ENCODE measurements at regions of chrX and their contacts with region 1.

Region 1: DNA sequence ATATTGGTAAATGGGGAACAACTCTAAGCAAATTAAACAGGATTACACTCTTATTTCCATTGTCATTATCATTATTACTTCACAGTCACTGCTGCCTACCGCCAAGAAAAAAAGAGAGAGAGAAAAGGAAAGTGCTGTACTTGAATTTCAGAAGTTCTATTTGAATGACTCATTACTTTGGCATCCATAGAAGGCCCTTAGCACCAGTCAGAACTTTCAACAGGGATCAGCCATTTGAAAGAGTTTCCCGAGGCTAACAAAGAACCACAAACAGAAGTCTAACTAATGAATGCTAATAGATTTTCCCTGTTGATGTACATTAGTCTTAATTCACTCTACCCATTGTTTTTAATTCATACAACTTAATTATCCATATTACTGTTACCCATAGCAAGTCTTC is 116.3 kb downstream of the SHROOM4 start:
- H3K4me3 ChIP-seq: no peak overlapping the region
- H3K27ac ChIP-seq: no peak overlapping the region
- H3K4me1 ChIP-seq: no peaks in the 10 kb centered on the region
- CTCF ChIP-seq: no peak

Region 2: GRCh38 chrX:49862093-49862492 is 835.6 kb before region 1 on chrX:
- CTCF ChIA-PET with region 1: no interaction called
- POLR2A ChIA-PET with region 1: interaction called, 10 read pairs
- H3K4me3 ChIP-seq: no peak overlapping the region
- H3K27ac ChIP-seq: no peak overlapping the region
- H3K4me1 ChIP-seq: no peaks in the 10 kb centered on the region
- CTCF ChIP-seq: no peak

Region 3: GRCh38 chrX:50996930-50997329 is 299.2 kb after region 1 on chrX:
- CTCF ChIA-PET with region 1: no interaction called
- POLR2A ChIA-PET with region 1: no interaction called
- H3K4me3 ChIP-seq: no peak overlapping the region
- H3K27ac ChIP-seq: no peak overlapping the region
- H3K4me1 ChIP-seq: no peaks in the 10 kb centered on the region
- CTCF ChIP-seq: no peak

Measured in HEK293 (cell line).